ENCODE measurements at regions of chr17 and their contacts with region 1.

Region 1: DNA sequence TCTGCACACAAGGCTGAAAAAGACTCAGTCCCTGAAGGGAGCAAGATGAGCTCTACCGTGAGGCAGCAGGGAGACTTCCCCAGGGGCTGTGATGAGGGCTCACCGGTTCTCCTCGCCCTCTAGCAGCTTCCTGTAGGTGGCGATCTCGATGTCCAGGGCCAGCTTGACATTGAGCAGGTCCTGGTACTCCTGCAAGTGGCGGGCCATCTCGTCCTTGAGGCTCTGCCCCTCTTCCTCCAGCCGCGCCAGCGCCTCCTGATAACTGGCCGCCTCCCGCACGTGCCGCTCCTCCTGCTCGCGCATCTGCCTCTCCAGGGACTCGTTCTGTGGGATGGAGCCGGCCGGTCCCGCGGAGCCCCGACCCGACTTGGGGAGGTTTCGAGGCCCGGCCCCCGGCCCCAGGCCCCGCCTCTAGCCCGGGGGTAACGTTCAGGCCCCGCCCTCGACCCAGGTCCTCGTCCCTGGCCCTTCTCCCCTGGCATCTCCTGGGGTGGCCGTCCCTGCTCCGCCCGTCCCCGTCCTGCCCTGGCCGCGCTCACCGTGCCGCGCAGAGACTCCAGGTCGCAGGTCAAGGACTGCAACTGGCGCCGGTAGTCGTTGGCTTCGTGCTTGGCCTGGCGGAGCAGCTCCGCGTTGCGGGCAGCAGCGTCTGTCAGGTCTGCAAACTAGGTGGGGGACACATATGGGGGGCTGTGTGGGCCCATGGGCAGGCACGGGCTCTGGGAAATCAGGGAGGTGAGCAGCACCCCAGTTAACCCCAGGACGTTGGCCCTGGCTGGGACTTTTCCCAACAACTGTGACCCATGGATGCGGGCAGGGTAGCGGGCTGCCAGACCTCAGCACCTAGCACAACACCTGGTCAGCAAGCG is 3.9 kb downstream of the GFAP start:
- DNase-seq: peak; percentile 72
- ATAC-seq: peak; percentile 84
- H3K4me3 Mint-ChIP-seq: no peak overlapping the region
- H3K27ac Mint-ChIP-seq: no peak overlapping the region
- H3K4me1 Mint-ChIP-seq: peaks cover 17% of the 10 kb centered on the region
- H3K27me3 Mint-ChIP-seq: peaks cover 33% of the 10 kb centered on the region

Region 2: DNA sequence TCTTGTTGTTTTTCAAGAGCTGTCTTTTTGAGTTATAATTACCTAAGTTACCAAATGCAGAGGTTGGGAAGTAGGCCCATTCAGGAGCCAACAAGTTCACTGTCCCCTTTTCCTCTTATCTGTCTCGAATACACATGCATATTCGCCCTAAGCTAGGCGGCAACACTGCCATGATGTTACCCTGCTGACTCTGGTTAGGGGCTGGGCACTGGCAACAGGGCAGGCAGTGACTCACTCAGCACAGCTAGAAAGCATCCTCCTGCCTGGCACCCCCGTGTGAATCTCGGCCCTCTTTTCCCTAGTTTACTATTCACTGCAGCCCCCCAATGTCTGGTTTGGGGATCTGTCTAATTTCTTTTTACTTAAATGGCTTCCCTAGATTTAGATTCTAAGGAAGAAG is 189.1 kb before region 1 on chr17:
- CTCF ChIA-PET with region 1: no interaction called
- POLR2A ChIA-PET with region 1: no interaction called
- DNase-seq: no peak
- ATAC-seq: no peak
- H3K4me3 Mint-ChIP-seq: no peak overlapping the region
- H3K27ac Mint-ChIP-seq: no peak overlapping the region
- H3K4me1 Mint-ChIP-seq: no peaks in the 10 kb centered on the region
- H3K27me3 Mint-ChIP-seq: no peaks in the 10 kb centered on the region

Region 3: GRCh38 chr17:44899069-44899782 is 12.1 kb before region 1 on chr17 and contains the start of gene EFTUD2:
- CTCF ChIA-PET with region 1: interaction called, 26 read pairs
- POLR2A ChIA-PET with region 1: interaction called, 9 read pairs
- DNase-seq: peak; percentile 93
- ATAC-seq: peak; percentile 93
- H3K4me3 Mint-ChIP-seq: peak within 1 kb of the TSS; percentile 92
- H3K27ac Mint-ChIP-seq: peak within 1 kb of the TSS; percentile 100
- H3K4me1 Mint-ChIP-seq: peaks cover 26% of the 10 kb centered on the region
- H3K27me3 Mint-ChIP-seq: peaks cover 4% of the 10 kb centered on the region
- total RNA-seq, gene EFTUD2: 148 to 156 TPM

Measured in activated CD8-positive, alpha-beta T cell treated with anti-CD3 and anti-CD28 coated beads, Interleukin-2, amount 10 ng/mL, durations not matched to agents 7 days and 5 days (primary cell).